ENCODE measurements at regions of chr2 and their contacts with region 1.

Region 1: DNA sequence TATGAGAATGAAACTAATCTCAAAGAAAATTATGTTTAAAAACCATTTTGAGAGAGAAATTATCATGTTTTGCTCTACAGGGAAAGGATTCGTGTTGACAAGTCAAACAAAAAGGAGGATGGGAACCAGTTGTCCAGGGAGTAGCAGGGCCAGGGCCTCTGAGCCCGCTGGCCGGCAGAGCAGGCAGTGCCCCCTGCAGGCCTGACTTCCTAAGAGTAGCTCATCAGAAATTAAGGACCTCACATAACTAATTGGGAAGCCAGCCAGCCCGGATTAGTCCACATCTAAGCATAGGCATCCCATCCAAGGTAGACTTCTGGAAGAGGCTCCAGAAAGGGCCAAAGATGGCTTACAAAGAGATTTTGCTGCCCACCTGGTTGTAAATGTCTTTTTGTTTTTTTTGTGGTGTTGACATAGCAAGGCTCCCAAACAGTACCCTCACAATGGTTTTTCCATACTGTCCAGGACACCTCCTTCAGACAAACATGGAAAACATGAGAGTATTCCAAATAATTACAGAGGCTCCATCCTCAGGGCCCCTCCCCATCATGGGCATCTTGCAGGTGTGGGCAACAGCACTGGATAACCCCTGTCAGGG is 241.2 kb upstream of the TANK start:
- DNase-seq: peak in 7 of 9 donors; percentile 3 to 28 (median 10)
- ATAC-seq: peak; percentile 47
- H3K4me3 ChIP-seq: no peak overlapping the region
- H3K4me3 Mint-ChIP-seq: no peak overlapping the region
- H3K27ac ChIP-seq: no peak overlapping the region
- H3K27ac Mint-ChIP-seq: peak overlapping the region in 1 of 9 donors; percentile 6
- H3K4me1 ChIP-seq: no peaks in the 10 kb centered on the region
- H3K4me1 Mint-ChIP-seq: no peaks in the 10 kb centered on the region
- H3K27me3 ChIP-seq: no peaks in the 10 kb centered on the region
- H3K27me3 Mint-ChIP-seq: peaks cover 0 to 7% (median 0%) of the 10 kb centered on the region in 5 donors

Region 2: DNA sequence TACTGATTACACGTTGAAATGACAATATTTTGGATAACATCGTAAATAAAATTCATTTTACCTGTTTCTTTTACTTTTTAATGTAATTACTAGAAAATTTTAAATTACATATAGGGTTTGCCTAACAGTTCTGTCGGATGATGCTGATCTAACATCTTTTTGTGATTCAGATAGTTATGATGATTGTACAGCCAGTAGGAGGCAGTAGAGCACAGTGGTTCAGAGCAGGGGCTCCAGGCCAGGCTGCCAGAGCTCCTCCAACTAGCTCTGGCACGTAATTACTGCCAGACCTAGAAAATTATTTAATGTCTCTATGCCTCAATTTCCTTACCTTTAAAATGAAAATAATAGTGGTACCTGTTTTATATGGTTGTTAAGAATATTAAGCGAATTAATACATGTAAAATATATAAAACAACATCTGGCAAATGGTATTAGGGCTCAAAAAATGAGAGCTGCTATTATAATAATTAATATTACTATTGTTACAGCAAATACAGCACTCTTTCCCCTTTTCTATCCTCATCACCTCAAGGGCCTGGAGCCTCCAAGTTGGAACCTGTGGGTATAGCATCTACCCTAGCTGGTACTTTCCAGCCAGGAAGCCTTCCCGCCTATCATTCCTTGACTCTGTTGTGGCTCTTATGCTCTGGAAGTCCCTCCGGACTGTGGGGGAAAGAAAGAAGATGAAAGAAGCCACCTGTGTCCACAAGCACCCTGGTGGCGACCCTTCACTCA is 808.9 kb before region 1 on chr2:
- CTCF ChIA-PET with region 1: no interaction called
- POLR2A ChIA-PET with region 1: no interaction called
- intact Hi-C with region 1: loop called in 1 of 2 experiments (anchors 2 kb)
- DNase-seq: peak in 7 of 9 donors; percentile 34 to 74 (median 66)
- ATAC-seq: peak; percentile 85
- H3K4me3 ChIP-seq: no peak overlapping the region
- H3K4me3 Mint-ChIP-seq: no peak overlapping the region
- H3K27ac ChIP-seq: no peak overlapping the region
- H3K27ac Mint-ChIP-seq: no peak overlapping the region
- H3K4me1 ChIP-seq: no peaks in the 10 kb centered on the region
- H3K4me1 Mint-ChIP-seq: no peaks in the 10 kb centered on the region
- H3K27me3 ChIP-seq: no peaks in the 10 kb centered on the region
- H3K27me3 Mint-ChIP-seq: peaks cover 0 to 24% (median 8%) of the 10 kb centered on the region in 5 donors

Region 3: DNA sequence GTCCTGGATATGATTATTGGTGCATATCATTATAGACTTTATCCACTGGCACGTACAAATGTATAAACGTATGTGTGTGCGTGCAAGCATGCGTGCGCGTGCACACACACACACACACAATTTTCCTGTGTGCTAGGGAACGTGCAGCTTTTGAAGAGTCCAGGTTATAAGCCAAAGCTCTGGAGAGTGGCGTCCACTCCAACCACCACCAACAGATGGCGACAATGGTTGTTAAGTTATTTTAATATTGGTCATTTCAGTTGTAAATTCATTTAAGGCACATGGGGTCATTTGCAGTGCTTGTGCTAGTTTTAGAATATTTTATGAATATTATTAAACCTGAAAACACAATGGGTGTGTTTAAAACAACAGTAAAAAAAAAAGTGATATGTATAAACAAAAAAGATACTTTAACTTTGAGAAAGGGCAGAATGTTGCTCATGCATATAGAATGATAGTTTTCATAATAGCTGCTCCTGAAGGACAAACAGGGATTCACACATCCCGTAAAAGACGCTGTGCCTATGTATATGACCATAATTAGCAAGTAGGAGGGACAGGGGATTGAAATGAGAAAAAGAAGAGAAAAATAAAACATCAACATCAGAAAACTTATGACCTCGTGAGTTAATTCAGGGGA is 594.7 kb before region 1 on chr2:
- CTCF ChIA-PET with region 1: interaction called, 4 read pairs
- POLR2A ChIA-PET with region 1: no interaction called
- intact Hi-C with region 1: loop called (anchors 1 kb)
- DNase-seq: peak in 5 of 9 donors; percentile 10 to 38 (median 21)
- ATAC-seq: peak; percentile 64
- H3K4me3 ChIP-seq: no peak overlapping the region
- H3K4me3 Mint-ChIP-seq: peak overlapping the region in 1 of 10 donors; percentile 40
- H3K27ac ChIP-seq: no peak overlapping the region
- H3K27ac Mint-ChIP-seq: peak overlapping the region in 3 of 9 donors; percentile 10 to 65 (median 32)
- H3K4me1 ChIP-seq: peaks cover 10 to 58% of the 10 kb centered on the region in 2 donors
- H3K4me1 Mint-ChIP-seq: peaks cover 61 to 98% (median 96%) of the 10 kb centered on the region in 7 donors
- H3K27me3 ChIP-seq: no peaks in the 10 kb centered on the region
- H3K27me3 Mint-ChIP-seq: no peaks in the 10 kb centered on the region

Region 4: DNA sequence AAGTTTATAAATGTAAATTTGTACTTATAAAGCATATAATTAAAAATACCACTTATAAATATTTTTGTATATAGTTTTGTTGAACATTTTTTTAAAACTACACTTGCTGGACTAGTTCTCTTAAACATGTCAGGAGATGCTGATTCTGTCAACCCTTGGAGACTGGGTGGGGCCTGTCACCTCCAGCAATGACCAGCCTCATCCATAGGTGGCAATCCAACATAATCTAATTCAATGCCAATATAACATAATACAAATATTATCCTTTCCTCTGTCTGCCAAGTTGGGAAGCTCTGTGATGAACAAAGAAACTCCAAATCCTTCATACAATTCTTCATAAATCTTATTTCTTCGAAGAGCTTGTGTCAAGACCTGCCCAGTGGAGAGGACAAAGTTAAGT is 565.8 kb before region 1 on chr2:
- CTCF ChIA-PET with region 1: interaction called, 3 read pairs
- POLR2A ChIA-PET with region 1: no interaction called
- intact Hi-C with region 1: loop called (anchors 1 kb)
- DNase-seq: peak in 6 of 9 donors; percentile 14 to 45 (median 24)
- ATAC-seq: peak; percentile 72
- H3K4me3 ChIP-seq: no peak overlapping the region
- H3K4me3 Mint-ChIP-seq: peak overlapping the region in 1 of 10 donors; percentile 36
- H3K27ac ChIP-seq: no peak overlapping the region
- H3K27ac Mint-ChIP-seq: peak overlapping the region in 4 of 9 donors; percentile 51 to 81 (median 66)
- H3K4me1 ChIP-seq: peaks cover 0 to 5% of the 10 kb centered on the region in 2 donors
- H3K4me1 Mint-ChIP-seq: peaks cover 47 to 91% (median 83%) of the 10 kb centered on the region in 7 donors
- H3K27me3 ChIP-seq: no peaks in the 10 kb centered on the region
- H3K27me3 Mint-ChIP-seq: no peaks in the 10 kb centered on the region